Prostate gland (tissue), 2 donors: ENCODE measurements at regions of chr20 and their contacts with region 1.

Region 1: DNA sequence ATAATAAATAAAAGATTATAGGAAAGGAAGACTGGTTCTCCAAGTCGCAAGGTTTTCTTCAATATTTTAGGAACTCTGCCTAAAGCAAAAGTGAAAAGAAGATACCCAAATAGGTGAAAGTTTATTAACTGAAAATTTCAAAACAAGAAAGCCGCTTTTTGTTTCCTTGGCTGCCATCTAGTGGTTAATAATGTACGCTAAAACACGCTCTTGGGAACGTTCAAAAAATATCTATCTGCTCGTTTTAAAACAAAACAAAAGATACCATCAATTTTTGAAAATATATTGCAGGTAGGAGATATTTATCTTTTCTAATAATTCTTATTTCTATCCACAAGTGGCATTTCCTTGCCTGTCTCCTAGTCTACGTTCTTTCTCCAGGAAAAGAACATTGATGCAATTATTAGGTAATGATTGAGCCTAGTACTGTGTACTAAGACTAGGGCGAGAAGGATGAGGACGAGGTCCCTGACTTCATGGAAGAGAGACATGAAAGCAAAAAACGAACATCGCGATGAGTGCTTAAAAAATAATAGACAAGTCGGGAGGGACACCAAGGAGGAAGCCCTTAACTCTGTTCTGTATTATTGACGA is 97.2 kb downstream of the SPTLC3 start:
- DNase-seq: no peak
- H3K4me3 ChIP-seq: no peak overlapping the region
- H3K27ac ChIP-seq: no peak overlapping the region
- H3K4me1 ChIP-seq: no peaks in the 10 kb centered on the region
- H3K27me3 ChIP-seq: no peaks in the 10 kb centered on the region
- CTCF ChIP-seq: peak; percentile 23 to 74 (median 70)
- POLR2A ChIP-seq: no peak

Region 2: GRCh38 chr20:12925214-12925755 is 180.7 kb before region 1 on chr20:
- intact Hi-C with region 1: loop called (anchors 5 kb)
- DNase-seq: peak; percentile 53
- H3K4me3 ChIP-seq: no peak overlapping the region
- H3K27ac ChIP-seq: no peak overlapping the region
- H3K4me1 ChIP-seq: peaks cover 8% of the 10 kb centered on the region
- H3K27me3 ChIP-seq: no peaks in the 10 kb centered on the region
- CTCF ChIP-seq: peak; percentile 45 to 92 (median 86)
- POLR2A ChIP-seq: no peak

Region 3: GRCh38 chr20:12970372-12970821 is 135.6 kb before region 1 on chr20:
- intact Hi-C with region 1: loop called (anchors 5 kb)
- DNase-seq: no peak
- H3K4me3 ChIP-seq: no peak overlapping the region
- H3K27ac ChIP-seq: no peak overlapping the region
- H3K4me1 ChIP-seq: no peaks in the 10 kb centered on the region
- H3K27me3 ChIP-seq: no peaks in the 10 kb centered on the region
- CTCF ChIP-seq: peak in 3 of 4 experiments; percentile 31 to 61 (median 58)
- POLR2A ChIP-seq: no peak

Region 4: DNA sequence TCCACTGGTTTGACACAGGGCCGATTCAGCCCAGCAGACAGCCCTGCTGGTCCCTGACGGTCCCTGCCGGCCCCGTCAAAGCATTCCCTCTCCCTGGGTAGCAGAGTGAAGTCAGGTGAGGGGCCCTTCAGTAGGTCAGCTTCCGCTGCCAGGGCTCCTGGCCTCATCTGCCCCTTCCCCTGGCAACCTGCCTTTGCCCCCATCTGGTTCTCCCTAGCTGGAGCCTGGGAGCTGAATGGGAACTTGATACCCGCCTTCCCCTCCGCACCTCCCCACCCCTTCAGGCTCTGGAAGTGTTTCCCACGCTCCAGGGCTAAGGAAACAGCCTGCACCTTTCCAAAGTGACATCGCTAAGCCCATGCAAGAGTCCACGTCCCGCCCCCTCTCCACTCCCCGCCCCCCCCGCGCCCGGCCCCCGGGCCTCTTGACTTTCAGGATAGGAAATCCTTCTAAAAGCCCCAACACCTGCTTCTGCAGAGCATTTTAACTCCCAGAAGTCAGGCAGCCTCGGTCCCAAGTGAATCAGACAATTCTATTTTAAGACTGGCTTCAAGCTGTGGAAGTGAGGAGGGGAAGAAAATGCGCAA is 168.4 kb after region 1 on chr20:
- intact Hi-C with region 1: no loop called
- DNase-seq: no peak
- H3K4me3 ChIP-seq: no peak overlapping the region
- H3K27ac ChIP-seq: no peak overlapping the region
- H3K4me1 ChIP-seq: no peaks in the 10 kb centered on the region
- H3K27me3 ChIP-seq: no peaks in the 10 kb centered on the region
- CTCF ChIP-seq: no peak
- POLR2A ChIP-seq: no peak